CD8-positive, alpha-beta T cell (primary cell): ENCODE measurements at regions of chr1 and their contacts with region 1.

Region 1: GRCh38 chr1:24847995-24848881 is 81.8 kb downstream of the RUNX3 start:
- DNase-seq: peak; percentile 82 to 96 (median 91)
- ATAC-seq: peak; percentile 92
- H3K4me3 ChIP-seq: peak overlapping the region; percentile 44 to 58
- H3K4me3 Mint-ChIP-seq: peak overlapping the region; percentile 63
- H3K27ac ChIP-seq: peak overlapping the region; percentile 11 to 63
- H3K27ac Mint-ChIP-seq: peak overlapping the region; percentile 79
- H3K4me1 ChIP-seq: peaks cover 19% of the 10 kb centered on the region
- H3K4me1 Mint-ChIP-seq: peaks cover 16% of the 10 kb centered on the region
- H3K27me3 ChIP-seq: no peaks in the 10 kb centered on the region
- H3K27me3 Mint-ChIP-seq: no peaks in the 10 kb centered on the region
- CTCF ChIP-seq: peak; percentile 84

Region 2: GRCh38 chr1:24822887-24823286 is 25.4 kb before region 1 on chr1:
- CTCF ChIA-PET with region 1: no interaction called
- POLR2A ChIA-PET with region 1: no interaction called
- intact Hi-C with region 1: no loop called
- DNase-seq: no peak
- ATAC-seq: no peak
- H3K4me3 ChIP-seq: no peak overlapping the region
- H3K4me3 Mint-ChIP-seq: no peak overlapping the region
- H3K27ac ChIP-seq: no peak overlapping the region
- H3K27ac Mint-ChIP-seq: no peak overlapping the region
- H3K4me1 ChIP-seq: no peaks in the 10 kb centered on the region
- H3K4me1 Mint-ChIP-seq: no peaks in the 10 kb centered on the region
- H3K27me3 ChIP-seq: peaks cover 0 to 3% of the 10 kb centered on the region in 2 experiments
- H3K27me3 Mint-ChIP-seq: peaks cover 6% of the 10 kb centered on the region
- CTCF ChIP-seq: no peak

Region 3: GRCh38 chr1:24909388-24909898 is 61.2 kb after region 1 on chr1:
- CTCF ChIA-PET with region 1: interaction called, 9 read pairs
- POLR2A ChIA-PET with region 1: interaction called, 4 read pairs
- intact Hi-C with region 1: loop called in 1 of 2 experiments (anchors 1 kb)
- DNase-seq: peak in 3 of 9 experiments; percentile 13 to 41 (median 28)
- ATAC-seq: no peak
- H3K4me3 ChIP-seq: no peak overlapping the region
- H3K4me3 Mint-ChIP-seq: peak overlapping the region; percentile 5
- H3K27ac ChIP-seq: peak overlapping the region; percentile 24 to 96
- H3K27ac Mint-ChIP-seq: peak overlapping the region; percentile 100
- H3K4me1 ChIP-seq: peaks cover 87% of the 10 kb centered on the region
- H3K4me1 Mint-ChIP-seq: peaks cover 68% of the 10 kb centered on the region
- H3K27me3 ChIP-seq: no peaks in the 10 kb centered on the region
- H3K27me3 Mint-ChIP-seq: no peaks in the 10 kb centered on the region
- CTCF ChIP-seq: no peak

Region 4: DNA sequence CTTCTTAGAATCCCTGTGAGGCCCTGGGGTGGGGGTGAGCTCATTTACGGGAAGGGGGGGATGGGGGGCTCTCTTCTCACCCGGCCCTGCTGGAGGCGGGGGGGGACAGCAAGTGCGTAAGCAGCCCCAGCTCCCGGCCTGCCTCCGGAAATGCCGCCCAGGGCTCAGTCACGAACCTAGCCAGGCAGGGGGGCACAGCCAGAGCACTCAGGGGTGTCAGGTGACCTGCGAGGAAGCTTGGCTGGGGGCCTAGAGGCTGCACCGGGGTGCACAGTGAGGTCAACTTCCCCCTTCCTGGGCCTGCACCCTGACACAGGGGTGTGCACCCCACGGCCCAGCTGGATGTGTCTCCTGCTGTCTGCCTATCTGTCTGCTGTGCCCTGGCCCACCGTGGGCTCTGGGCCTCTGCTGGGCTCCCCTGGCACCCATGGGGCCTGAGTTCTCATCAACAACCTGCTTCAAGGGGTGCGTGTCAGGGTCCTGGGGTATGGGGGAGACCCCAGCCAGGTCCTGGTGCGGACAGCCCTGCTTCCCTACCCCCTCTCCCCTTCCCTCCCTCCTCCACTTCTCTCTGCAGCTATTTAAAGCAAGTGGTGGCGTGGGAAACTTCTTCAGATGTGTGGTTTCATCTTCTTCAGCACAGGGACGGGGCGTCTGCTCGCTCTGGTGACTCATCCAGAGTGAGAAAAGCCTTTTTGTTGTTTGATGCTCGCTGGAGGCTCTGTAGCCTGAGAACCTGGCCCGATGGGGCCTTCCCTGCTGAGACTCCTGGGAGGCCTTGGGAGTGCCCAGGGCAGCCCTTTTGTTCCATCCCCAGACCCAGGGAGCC is 174.3 kb after region 1 on chr1:
- CTCF ChIA-PET with region 1: interaction called, 10 read pairs
- POLR2A ChIA-PET with region 1: no interaction called
- intact Hi-C with region 1: no loop called
- DNase-seq: peak; percentile 91 to 100 (median 95)
- ATAC-seq: peak; percentile 83
- H3K4me3 ChIP-seq: peak overlapping the region; percentile 43 to 45
- H3K4me3 Mint-ChIP-seq: peak overlapping the region; percentile 58
- H3K27ac ChIP-seq: peak overlapping the region; percentile 83 to 100
- H3K27ac Mint-ChIP-seq: peak overlapping the region; percentile 93
- H3K4me1 ChIP-seq: peaks cover 90% of the 10 kb centered on the region
- H3K4me1 Mint-ChIP-seq: peaks cover 88% of the 10 kb centered on the region
- H3K27me3 ChIP-seq: no peaks in the 10 kb centered on the region
- H3K27me3 Mint-ChIP-seq: no peaks in the 10 kb centered on the region
- CTCF ChIP-seq: no peak

Region 5: GRCh38 chr1:25148673-25149300 is 300.5 kb after region 1 on chr1:
- CTCF ChIA-PET with region 1: interaction called, 20 read pairs
- POLR2A ChIA-PET with region 1: no interaction called
- intact Hi-C with region 1: loop called (anchors 1 kb)
- DNase-seq: peak in 5 of 9 experiments; percentile 29 to 78 (median 34)
- ATAC-seq: peak; percentile 73
- H3K4me3 ChIP-seq: no peak overlapping the region
- H3K4me3 Mint-ChIP-seq: no peak overlapping the region
- H3K27ac ChIP-seq: no peak overlapping the region
- H3K27ac Mint-ChIP-seq: no peak overlapping the region
- H3K4me1 ChIP-seq: no peaks in the 10 kb centered on the region
- H3K4me1 Mint-ChIP-seq: peaks cover 4% of the 10 kb centered on the region
- H3K27me3 ChIP-seq: no peaks in the 10 kb centered on the region
- H3K27me3 Mint-ChIP-seq: peaks cover 13% of the 10 kb centered on the region
- CTCF ChIP-seq: peak; percentile 69

Region 6: DNA sequence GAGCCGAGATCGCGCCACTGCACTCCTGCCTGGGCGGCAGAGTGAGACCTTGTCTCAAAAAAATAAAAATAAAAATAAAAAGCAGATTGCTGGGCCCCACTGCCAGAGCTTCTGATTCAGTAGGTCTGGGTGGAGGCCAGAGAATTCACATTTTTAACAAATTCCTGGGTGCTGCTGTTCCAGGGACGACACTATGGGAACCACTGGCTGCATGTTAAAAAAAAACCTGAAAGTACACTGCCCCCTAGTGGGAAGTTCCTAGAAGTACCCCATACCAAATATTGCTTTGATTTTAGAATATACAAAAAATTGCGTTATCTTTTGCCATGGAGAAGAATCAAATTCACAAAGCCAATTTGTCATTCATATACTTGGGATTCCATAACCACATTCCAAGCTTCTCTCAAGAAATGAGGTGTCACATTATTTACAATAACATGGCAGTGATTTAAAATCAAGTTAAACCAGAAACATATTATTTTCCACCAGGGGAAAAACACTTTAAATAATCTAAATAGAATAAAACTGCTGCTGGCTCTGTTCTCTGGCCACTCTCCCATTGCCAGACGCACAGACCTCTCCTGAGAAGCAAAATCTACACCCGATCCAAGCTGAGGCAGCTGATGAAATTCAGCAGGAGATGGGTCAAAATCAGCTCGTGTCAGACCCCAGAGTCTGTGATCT is 356.7 kb after region 1 on chr1:
- CTCF ChIA-PET with region 1: interaction called, 48 read pairs
- POLR2A ChIA-PET with region 1: interaction called, 3 read pairs
- intact Hi-C with region 1: loop called (anchors 1 kb)
- DNase-seq: peak in 5 of 9 experiments; percentile 13 to 73 (median 50)
- ATAC-seq: peak; percentile 70
- H3K4me3 ChIP-seq: no peak overlapping the region
- H3K4me3 Mint-ChIP-seq: no peak overlapping the region
- H3K27ac ChIP-seq: no peak overlapping the region
- H3K27ac Mint-ChIP-seq: no peak overlapping the region
- H3K4me1 ChIP-seq: no peaks in the 10 kb centered on the region
- H3K4me1 Mint-ChIP-seq: peaks cover 2% of the 10 kb centered on the region
- H3K27me3 ChIP-seq: no peaks in the 10 kb centered on the region
- H3K27me3 Mint-ChIP-seq: peaks cover 10% of the 10 kb centered on the region
- CTCF ChIP-seq: peak; percentile 85